B cell (primary cell): ENCODE measurements at regions of chr16 and their contacts with region 1.

Region 1: DNA sequence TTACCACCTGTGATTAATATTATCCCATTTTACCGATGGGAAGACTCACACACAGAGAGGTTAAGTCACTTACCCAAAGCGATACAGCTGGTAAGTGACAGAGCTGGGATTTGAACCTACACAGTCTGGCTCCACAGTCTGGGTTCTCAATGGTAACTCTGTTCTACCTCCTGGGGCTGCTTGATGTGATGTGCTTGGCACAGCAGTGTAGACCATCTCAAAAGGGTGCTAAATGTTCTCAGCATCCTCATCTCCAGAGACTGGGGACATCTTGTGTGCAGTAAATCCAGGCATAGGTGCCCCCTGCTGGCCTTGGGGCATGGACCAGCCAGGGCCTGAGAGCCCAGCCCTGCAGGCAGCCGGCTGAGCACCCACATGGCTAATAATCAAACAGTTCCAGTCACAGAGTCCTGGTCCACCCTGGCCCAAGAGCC is 15.4 kb upstream of the KATNB1 start:
- DNase-seq: peak; percentile 50
- ATAC-seq: peak; percentile 47
- H3K4me3 ChIP-seq: no peak overlapping the region
- H3K4me3 Mint-ChIP-seq: no peak overlapping the region
- H3K27ac ChIP-seq: no peak overlapping the region
- H3K27ac Mint-ChIP-seq: no peak overlapping the region
- H3K4me1 ChIP-seq: peaks cover 0 to 3% of the 10 kb centered on the region in 2 donors
- H3K4me1 Mint-ChIP-seq: peaks cover 2% of the 10 kb centered on the region
- H3K27me3 ChIP-seq: peaks cover 0 to 3% (median 0%) of the 10 kb centered on the region in 4 experiments
- H3K27me3 Mint-ChIP-seq: peaks cover 5% of the 10 kb centered on the region
- CTCF ChIP-seq: peak; percentile 23

Region 2: GRCh38 chr16:57675741-57676584 is 44.2 kb before region 1 on chr16:
- CTCF ChIA-PET with region 1: no interaction called
- POLR2A ChIA-PET with region 1: no interaction called
- intact Hi-C with region 1: no loop called
- DNase-seq: no peak
- ATAC-seq: no peak
- H3K4me3 ChIP-seq: no peak overlapping the region
- H3K4me3 Mint-ChIP-seq: no peak overlapping the region
- H3K27ac ChIP-seq: no peak overlapping the region
- H3K27ac Mint-ChIP-seq: no peak overlapping the region
- H3K4me1 ChIP-seq: peaks cover 0 to 4% of the 10 kb centered on the region in 2 donors
- H3K4me1 Mint-ChIP-seq: no peaks in the 10 kb centered on the region
- H3K27me3 ChIP-seq: peaks cover 0 to 4% (median 2%) of the 10 kb centered on the region in 4 experiments
- H3K27me3 Mint-ChIP-seq: peaks cover 11% of the 10 kb centered on the region
- CTCF ChIP-seq: no peak

Region 3: DNA sequence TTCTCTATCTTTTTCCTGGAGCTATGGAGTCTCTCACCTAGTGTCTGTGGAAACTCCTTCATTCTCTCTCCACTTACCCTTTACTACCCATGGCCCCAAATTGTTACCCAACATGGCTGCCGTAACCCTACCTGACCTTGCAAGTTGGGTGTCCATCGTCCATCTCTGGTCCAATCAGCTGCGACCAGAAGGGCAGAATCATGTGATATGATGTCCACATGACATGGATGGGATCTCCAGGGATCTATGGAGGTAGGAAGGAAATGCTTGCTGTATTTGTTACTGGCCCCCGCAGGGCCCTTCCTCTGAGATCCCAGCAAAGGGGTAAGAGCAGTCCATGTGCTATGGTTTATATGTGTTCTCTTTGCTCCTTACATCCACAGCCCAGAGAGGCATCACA is 33.6 kb before region 1 on chr16:
- CTCF ChIA-PET with region 1: interaction called, 3 read pairs
- POLR2A ChIA-PET with region 1: interaction called, 10 read pairs
- intact Hi-C with region 1: no loop called
- DNase-seq: no peak
- ATAC-seq: no peak
- H3K4me3 ChIP-seq: no peak overlapping the region
- H3K4me3 Mint-ChIP-seq: no peak overlapping the region
- H3K27ac ChIP-seq: no peak overlapping the region
- H3K27ac Mint-ChIP-seq: no peak overlapping the region
- H3K4me1 ChIP-seq: peaks cover 24 to 26% of the 10 kb centered on the region in 2 donors
- H3K4me1 Mint-ChIP-seq: peaks cover 18% of the 10 kb centered on the region
- H3K27me3 ChIP-seq: no peaks in the 10 kb centered on the region
- H3K27me3 Mint-ChIP-seq: peaks cover 3% of the 10 kb centered on the region
- CTCF ChIP-seq: no peak

Region 4: DNA sequence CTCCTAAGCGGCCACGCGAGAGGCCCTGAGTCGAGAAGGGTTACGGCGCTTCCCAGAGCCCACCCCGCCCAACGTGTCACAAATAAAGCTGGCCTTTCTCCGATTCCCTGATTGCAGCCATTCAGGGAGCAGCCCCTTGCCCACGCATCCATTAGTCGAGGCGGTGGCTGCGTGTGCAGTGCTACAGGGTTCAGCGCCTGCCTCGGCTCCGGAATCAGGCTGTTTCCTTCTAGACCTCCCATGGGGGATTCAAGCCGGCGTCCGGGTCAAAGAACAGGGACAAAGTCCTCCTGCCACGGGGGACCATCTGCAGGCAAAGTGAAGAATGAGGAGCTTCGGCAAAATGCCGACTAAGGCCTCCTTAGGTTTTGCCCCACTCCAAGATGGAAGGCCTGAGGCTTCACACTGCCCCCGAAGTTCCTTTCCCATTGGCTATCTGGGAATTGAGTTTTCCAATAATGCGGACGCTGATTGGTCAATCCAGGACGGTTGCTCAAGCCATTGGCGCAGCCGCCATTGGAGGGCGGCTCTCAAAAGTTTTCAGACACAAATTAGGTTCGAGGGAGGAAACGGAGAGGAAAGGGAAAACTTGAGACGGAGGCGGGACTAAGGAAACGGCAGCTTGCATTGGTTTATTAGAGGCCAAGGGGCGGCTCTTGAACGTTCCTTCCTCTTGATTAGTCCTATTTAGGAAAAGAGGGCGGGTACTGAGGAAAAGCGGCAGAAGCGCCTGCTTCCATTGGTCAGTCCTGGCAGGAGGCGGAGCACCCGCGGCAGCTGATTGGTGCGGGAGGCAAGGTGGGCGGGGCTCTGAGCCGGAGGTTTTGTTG is 15.0 kb after region 1 on chr16:
- CTCF ChIA-PET with region 1: no interaction called
- POLR2A ChIA-PET with region 1: no interaction called
- intact Hi-C with region 1: no loop called
- DNase-seq: peak; percentile 99
- ATAC-seq: peak; percentile 88
- H3K4me3 ChIP-seq: peak overlapping the region; percentile 65 to 98 (median 90)
- H3K4me3 Mint-ChIP-seq: peak overlapping the region; percentile 93
- H3K27ac ChIP-seq: peak overlapping the region; percentile 37 to 78
- H3K27ac Mint-ChIP-seq: peak overlapping the region; percentile 89
- H3K4me1 ChIP-seq: peaks cover 15 to 19% of the 10 kb centered on the region in 2 donors
- H3K4me1 Mint-ChIP-seq: peaks cover 34% of the 10 kb centered on the region
- H3K27me3 ChIP-seq: no peaks in the 10 kb centered on the region
- H3K27me3 Mint-ChIP-seq: no peaks in the 10 kb centered on the region
- CTCF ChIP-seq: no peak

Region 5: GRCh38 chr16:57775661-57776469 is 55.7 kb after region 1 on chr16:
- CTCF ChIA-PET with region 1: no interaction called
- POLR2A ChIA-PET with region 1: no interaction called
- intact Hi-C with region 1: no loop called
- DNase-seq: no peak
- ATAC-seq: no peak
- H3K4me3 ChIP-seq: no peak overlapping the region
- H3K4me3 Mint-ChIP-seq: no peak overlapping the region
- H3K27ac ChIP-seq: no peak overlapping the region
- H3K27ac Mint-ChIP-seq: no peak overlapping the region
- H3K4me1 ChIP-seq: no peaks in the 10 kb centered on the region
- H3K4me1 Mint-ChIP-seq: no peaks in the 10 kb centered on the region
- H3K27me3 ChIP-seq: no peaks in the 10 kb centered on the region
- H3K27me3 Mint-ChIP-seq: no peaks in the 10 kb centered on the region
- CTCF ChIP-seq: no peak